ENCODE measurements at regions of chrX and their contacts with region 1.

Region 1: DNA sequence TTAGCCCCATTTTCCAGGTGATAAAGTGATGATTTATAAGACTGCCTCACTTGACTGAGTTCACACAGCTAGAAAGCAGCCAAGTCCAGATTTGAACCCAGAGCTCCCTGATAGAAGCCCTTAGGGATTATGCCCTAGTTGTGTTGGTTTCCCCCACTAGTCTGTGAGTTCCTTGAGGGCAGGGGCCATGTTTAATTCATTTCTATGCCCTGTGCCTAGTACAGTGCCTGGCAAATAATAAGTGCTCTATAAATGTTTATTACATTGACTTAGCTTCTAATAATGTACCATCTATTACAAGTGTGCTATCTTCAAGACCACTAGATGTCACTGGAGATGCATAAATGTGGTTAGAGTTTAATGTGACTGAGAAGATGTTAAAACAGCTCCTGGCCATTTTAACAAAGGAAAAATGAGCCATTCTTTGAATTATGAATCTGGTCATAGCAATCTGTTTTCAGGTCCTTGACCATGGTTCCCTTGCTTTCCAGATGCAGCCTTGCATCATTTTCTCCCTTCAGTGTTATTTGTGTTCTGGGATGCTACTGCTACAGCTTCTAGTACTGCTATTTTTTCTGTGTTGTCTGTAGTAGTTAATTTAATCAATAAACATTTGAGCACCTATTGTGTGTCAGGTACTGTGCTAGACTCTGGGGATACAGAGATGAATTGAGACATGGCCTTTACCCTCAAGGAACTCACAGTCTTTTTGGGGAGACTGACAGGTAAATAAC is 43.2 kb downstream of the SLC9A6 start:
- DNase-seq: no peak
- H3K4me3 ChIP-seq: no peak overlapping the region
- H3K27ac ChIP-seq: no peak overlapping the region
- H3K4me1 ChIP-seq: no peaks in the 10 kb centered on the region
- H3K27me3 ChIP-seq: no peaks in the 10 kb centered on the region
- CTCF ChIP-seq: peak; percentile 58

Region 2: GRCh38 chrX:136162831-136163570 is 134.6 kb after region 1 on chrX:
- intact Hi-C with region 1: loop called (anchors 5 kb)
- DNase-seq: peak; percentile 51
- H3K4me3 ChIP-seq: no peak overlapping the region
- H3K27ac ChIP-seq: no peak overlapping the region
- H3K4me1 ChIP-seq: no peaks in the 10 kb centered on the region
- H3K27me3 ChIP-seq: no peaks in the 10 kb centered on the region
- CTCF ChIP-seq: peak; percentile 69

Region 3: GRCh38 chrX:136214551-136214950 is 186.1 kb after region 1 on chrX:
- intact Hi-C with region 1: loop called (anchors 5 kb)
- DNase-seq: no peak
- H3K4me3 ChIP-seq: no peak overlapping the region
- H3K27ac ChIP-seq: no peak overlapping the region
- H3K4me1 ChIP-seq: no peaks in the 10 kb centered on the region
- H3K27me3 ChIP-seq: no peaks in the 10 kb centered on the region
- CTCF ChIP-seq: no peak

Region 4: DNA sequence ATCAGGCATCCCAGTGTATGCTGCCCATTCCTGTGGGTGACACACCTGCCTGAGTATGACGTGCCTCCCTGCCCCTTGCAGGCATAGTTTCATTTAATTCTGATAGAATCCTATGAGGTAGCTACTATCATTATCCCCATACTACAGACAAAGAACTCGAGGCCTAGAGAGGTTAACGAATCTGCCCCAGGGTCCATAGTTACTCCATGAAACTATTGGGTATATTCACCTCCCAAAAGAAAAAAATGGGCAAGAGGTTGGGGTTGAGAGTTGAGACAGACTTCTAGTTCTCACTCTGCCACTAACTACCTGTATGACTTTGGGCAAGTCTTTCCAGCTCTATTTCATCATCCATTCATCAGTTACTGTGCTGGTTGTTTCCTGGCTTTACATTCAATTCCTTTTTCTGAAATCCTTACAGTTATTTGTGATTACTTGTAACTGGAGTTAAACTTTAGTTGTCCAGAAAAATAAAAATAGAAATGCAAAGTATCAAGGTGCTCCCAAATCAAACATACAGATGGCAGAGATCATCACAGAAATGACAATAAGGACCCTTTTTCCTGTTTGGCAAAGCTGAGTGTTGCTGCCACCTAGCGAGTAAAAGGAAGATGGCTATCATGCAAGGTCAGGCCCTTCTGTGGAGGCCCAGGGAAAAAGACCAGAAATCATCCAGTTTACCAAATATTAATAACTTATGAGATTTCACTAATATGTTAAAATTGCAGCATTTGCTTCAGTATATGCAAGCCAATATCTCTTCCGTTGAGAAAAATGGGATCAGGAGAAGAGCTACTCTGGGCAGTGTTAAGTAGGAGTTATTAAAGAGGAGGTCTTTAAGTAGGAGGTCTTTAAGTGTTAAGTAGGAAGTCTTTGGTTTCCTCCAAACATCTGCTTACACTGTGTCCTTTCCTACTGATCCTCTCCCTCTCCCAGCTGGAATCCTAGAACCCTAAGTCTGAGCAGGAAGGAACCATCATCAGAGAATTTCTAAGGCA is 239.9 kb after region 1 on chrX:
- intact Hi-C with region 1: loop called (anchors 5 kb)
- DNase-seq: peak; percentile 47
- H3K4me3 ChIP-seq: no peak overlapping the region
- H3K27ac ChIP-seq: no peak overlapping the region
- H3K4me1 ChIP-seq: no peaks in the 10 kb centered on the region
- H3K27me3 ChIP-seq: no peaks in the 10 kb centered on the region
- CTCF ChIP-seq: peak; percentile 75

Region 5: GRCh38 chrX:136694431-136695087 is 666.1 kb after region 1 on chrX:
- intact Hi-C with region 1: loop called (anchors 10 kb)
- DNase-seq: no peak
- H3K4me3 ChIP-seq: no peak overlapping the region
- H3K27ac ChIP-seq: no peak overlapping the region
- H3K4me1 ChIP-seq: no peaks in the 10 kb centered on the region
- H3K27me3 ChIP-seq: no peaks in the 10 kb centered on the region
- CTCF ChIP-seq: peak; percentile 48

Measured in colonic mucosa (tissue), 4 donors.